ENCODE measurements at regions of chr4 and their contacts with region 1.

Region 1: DNA sequence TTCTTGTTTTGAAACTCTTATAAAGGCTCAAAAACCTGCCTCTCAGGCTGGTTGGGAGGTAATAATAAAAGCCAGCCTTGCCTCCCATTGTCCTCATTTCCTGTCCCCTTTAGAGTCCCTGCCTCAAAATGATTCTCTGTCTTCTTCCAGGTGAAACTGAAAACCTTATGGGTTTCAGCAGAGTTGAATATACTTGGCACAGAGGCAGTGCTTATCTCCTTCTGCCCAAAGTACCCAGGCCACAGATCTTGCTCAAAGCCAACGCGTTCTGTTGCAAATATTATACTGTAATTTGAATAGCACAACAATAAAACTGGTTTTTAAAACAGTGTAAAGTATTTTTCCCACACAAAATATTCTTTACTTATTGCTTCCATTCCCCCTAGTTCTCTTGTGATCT is 183.1 kb upstream of the GIMD1 start:
- DNase-seq: no peak
- H3K4me3 ChIP-seq: no peak overlapping the region
- H3K27ac ChIP-seq: no peak overlapping the region
- H3K4me1 ChIP-seq: no peaks in the 10 kb centered on the region
- H3K27me3 ChIP-seq: no peaks in the 10 kb centered on the region
- CTCF ChIP-seq: no peak
- POLR2A ChIP-seq: no peak

Region 2: GRCh38 chr4:106297245-106298035 is 254.3 kb before region 1 on chr4:
- intact Hi-C with region 1: loop called (anchors 5 kb)
- DNase-seq: no peak
- H3K4me3 ChIP-seq: no peak overlapping the region
- H3K27ac ChIP-seq: no peak overlapping the region
- H3K4me1 ChIP-seq: no peaks in the 10 kb centered on the region
- H3K27me3 ChIP-seq: no peaks in the 10 kb centered on the region
- CTCF ChIP-seq: no peak
- POLR2A ChIP-seq: no peak

Region 3: GRCh38 chr4:106444557-106444956 is 107.2 kb before region 1 on chr4:
- intact Hi-C with region 1: loop called (anchors 5 kb)
- DNase-seq: no peak
- H3K4me3 ChIP-seq: no peak overlapping the region
- H3K27ac ChIP-seq: no peak overlapping the region
- H3K4me1 ChIP-seq: no peaks in the 10 kb centered on the region
- H3K27me3 ChIP-seq: no peaks in the 10 kb centered on the region
- CTCF ChIP-seq: no peak
- POLR2A ChIP-seq: no peak